ENCODE measurements at regions of chr15 and their contacts with region 1.

Region 1: GRCh38 chr15:100612539-100612938 is 10.2 kb downstream of the ASB7 start:
- DNase-seq: no peak
- H3K4me3 ChIP-seq: no peak overlapping the region
- H3K27ac ChIP-seq: no peak overlapping the region
- H3K4me1 ChIP-seq: no peaks in the 10 kb centered on the region
- H3K27me3 ChIP-seq: no peaks in the 10 kb centered on the region

Region 2: DNA sequence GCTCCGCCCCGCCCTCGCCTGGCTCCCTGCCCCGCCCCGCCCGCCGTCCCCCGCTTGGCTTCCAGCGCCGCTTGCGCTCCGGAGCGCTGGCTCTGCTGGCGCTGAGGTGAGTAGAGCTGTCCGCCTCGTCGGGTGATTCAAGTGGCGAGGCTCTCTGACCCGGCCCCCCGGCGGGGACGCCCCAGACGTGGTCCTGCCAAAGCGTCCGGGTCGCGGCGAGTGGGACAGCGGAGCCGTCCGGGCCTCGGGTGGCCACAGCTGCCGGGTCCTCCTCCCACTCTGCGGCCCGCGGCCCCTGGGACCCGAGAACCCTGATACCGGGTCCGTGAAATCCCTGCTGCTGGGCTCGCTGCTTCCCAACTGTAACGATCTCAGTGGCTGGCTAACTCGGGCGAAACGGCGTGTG is 1361.1 kb before region 1 on chr15 and contains the start of gene LRRC28:
- in situ Hi-C with region 1: no loop called
- DNase-seq: no peak
- H3K4me3 ChIP-seq: peak within 1 kb of the TSS; percentile 99
- H3K27ac ChIP-seq: peak within 1 kb of the TSS; percentile 86
- H3K4me1 ChIP-seq: peaks cover 36% of the 10 kb centered on the region
- H3K27me3 ChIP-seq: no peaks in the 10 kb centered on the region
- total RNA-seq, gene LRRC28: 15.8 and 30.8 TPM in 2 replicates

Region 3: GRCh38 chr15:101269479-101270223 is 657.1 kb after region 1 on chr15:
- in situ Hi-C with region 1: loop called (anchors 10 kb)
- DNase-seq: peak; percentile 61
- H3K4me3 ChIP-seq: no peak overlapping the region
- H3K27ac ChIP-seq: no peak overlapping the region
- H3K4me1 ChIP-seq: peaks cover 33% of the 10 kb centered on the region
- H3K27me3 ChIP-seq: no peaks in the 10 kb centered on the region